CD8-positive, alpha-beta T cell (primary cell): ENCODE measurements at regions of chr3 and their contacts with region 1.

Region 1: GRCh38 chr3:49839193-49839809 is 17.1 kb downstream of the TRAIP start:
- DNase-seq: peak; percentile 63 to 89 (median 85)
- ATAC-seq: peak; percentile 98
- H3K4me3 ChIP-seq: no peak overlapping the region
- H3K4me3 Mint-ChIP-seq: no peak overlapping the region
- H3K27ac ChIP-seq: no peak overlapping the region
- H3K27ac Mint-ChIP-seq: no peak overlapping the region
- H3K4me1 ChIP-seq: no peaks in the 10 kb centered on the region
- H3K4me1 Mint-ChIP-seq: peaks cover 2% of the 10 kb centered on the region
- H3K27me3 ChIP-seq: no peaks in the 10 kb centered on the region
- H3K27me3 Mint-ChIP-seq: no peaks in the 10 kb centered on the region
- CTCF ChIP-seq: peak; percentile 73

Region 2: DNA sequence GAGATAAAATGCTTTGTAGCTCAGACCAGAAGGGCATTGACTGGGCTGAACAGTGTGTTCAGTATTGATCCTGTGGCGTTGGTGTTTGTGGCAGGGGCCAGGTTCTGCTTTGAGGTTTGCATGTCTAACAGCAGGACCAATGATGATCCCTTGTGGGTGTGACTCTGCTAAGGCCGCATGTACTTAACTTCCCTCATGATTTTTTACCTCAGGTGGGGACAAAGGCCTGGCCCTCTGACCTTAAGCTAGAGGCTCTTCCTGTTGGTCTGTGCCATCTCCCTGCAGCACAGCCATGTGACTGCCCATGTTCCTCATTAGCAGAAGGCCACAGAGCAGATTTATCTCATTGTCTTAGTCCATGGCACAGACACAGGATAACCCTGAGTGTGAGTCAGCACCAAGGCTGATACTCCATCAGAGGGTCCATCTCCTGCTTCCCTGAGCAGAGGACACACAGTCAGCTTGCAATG is 319.4 kb before region 1 on chr3:
- CTCF ChIA-PET with region 1: no interaction called
- POLR2A ChIA-PET with region 1: no interaction called
- intact Hi-C with region 1: no loop called
- DNase-seq: no peak
- ATAC-seq: no peak
- H3K4me3 ChIP-seq: no peak overlapping the region
- H3K4me3 Mint-ChIP-seq: no peak overlapping the region
- H3K27ac ChIP-seq: no peak overlapping the region
- H3K27ac Mint-ChIP-seq: no peak overlapping the region
- H3K4me1 ChIP-seq: no peaks in the 10 kb centered on the region
- H3K4me1 Mint-ChIP-seq: peaks cover 9% of the 10 kb centered on the region
- H3K27me3 ChIP-seq: no peaks in the 10 kb centered on the region
- H3K27me3 Mint-ChIP-seq: no peaks in the 10 kb centered on the region
- CTCF ChIP-seq: no peak

Region 3: GRCh38 chr3:49539659-49540560 is 299.4 kb before region 1 on chr3:
- CTCF ChIA-PET with region 1: interaction called, 29 read pairs
- POLR2A ChIA-PET with region 1: no interaction called
- intact Hi-C with region 1: loop called (anchors 1 to 2 kb)
- DNase-seq: peak; percentile 83 to 97 (median 92)
- ATAC-seq: peak; percentile 96
- H3K4me3 ChIP-seq: peak overlapping the region; percentile 65 to 71
- H3K4me3 Mint-ChIP-seq: peak overlapping the region; percentile 82
- H3K27ac ChIP-seq: peak overlapping the region; percentile 46 to 67
- H3K27ac Mint-ChIP-seq: peak overlapping the region; percentile 32
- H3K4me1 ChIP-seq: peaks cover 4% of the 10 kb centered on the region
- H3K4me1 Mint-ChIP-seq: peaks cover 2% of the 10 kb centered on the region
- H3K27me3 ChIP-seq: no peaks in the 10 kb centered on the region
- H3K27me3 Mint-ChIP-seq: peaks cover 10% of the 10 kb centered on the region
- CTCF ChIP-seq: peak; percentile 76

Region 4: DNA sequence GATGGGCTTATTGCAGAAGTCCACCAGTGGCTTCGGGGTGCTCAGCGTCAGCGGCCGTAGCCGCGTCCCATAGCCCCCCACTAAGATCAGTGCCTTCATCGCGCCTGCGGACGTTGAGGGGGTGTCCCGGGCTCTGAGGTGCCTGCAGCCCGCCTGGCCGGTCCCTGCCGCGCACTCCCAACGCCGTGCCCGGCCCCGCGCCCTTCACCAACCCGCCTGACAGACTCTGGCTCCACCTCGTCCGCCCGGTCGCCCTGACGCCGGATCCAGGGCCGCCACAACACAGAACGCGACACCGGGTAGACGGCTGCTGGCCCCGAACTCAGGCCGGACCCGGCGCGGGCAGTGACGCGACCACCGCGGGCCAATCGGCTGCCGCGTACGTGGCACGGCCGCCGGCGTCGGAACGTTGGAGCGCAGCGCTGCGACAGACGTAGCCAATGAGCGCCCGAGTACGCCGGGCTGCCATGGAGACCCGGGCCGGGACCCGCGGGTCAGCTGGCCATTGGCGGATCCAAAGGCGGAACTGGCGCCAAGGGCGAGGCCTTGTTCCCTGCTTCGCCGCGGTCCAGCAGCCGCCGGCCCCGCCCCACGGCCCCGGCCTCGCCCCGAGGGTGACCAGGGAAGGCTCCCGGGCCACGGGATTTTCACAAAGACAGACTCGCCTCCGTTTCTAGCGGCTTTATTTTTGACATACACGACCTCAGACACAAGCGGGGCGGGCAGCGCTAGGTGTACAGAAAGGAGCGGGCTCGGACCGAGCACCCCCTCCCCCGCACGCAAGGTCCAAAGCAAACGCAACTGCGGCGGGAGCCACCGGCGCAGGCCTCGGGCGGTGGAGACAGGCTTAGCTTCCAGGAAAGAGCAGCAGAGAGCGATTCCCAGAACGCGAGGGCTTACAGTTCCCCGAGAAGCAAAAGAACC is 115.4 kb before region 1 on chr3 and contains the start of gene GMPPB:
- CTCF ChIA-PET with region 1: interaction called, 6 read pairs
- POLR2A ChIA-PET with region 1: interaction called, 3 read pairs
- intact Hi-C with region 1: loop called in 1 of 2 experiments (anchors 5 kb)
- DNase-seq: peak; percentile 82 to 95 (median 91)
- ATAC-seq: peak; percentile 72
- H3K4me3 ChIP-seq: peak within 1 kb of the TSS; percentile 91 to 95
- H3K4me3 Mint-ChIP-seq: peak within 1 kb of the TSS; percentile 86
- H3K27ac ChIP-seq: peak within 1 kb of the TSS; percentile 84 to 93
- H3K27ac Mint-ChIP-seq: peak within 1 kb of the TSS; percentile 90
- H3K4me1 ChIP-seq: peaks cover 19% of the 10 kb centered on the region
- H3K4me1 Mint-ChIP-seq: peaks cover 36% of the 10 kb centered on the region
- H3K27me3 ChIP-seq: no peaks in the 10 kb centered on the region
- H3K27me3 Mint-ChIP-seq: no peaks in the 10 kb centered on the region
- CTCF ChIP-seq: no peak
- total RNA-seq, gene GMPPB: 34.9 to 36.6 TPM

Region 5: GRCh38 chr3:49794926-49795905 is 44.1 kb before region 1 on chr3:
- CTCF ChIA-PET with region 1: interaction called, 416 read pairs
- POLR2A ChIA-PET with region 1: no interaction called
- intact Hi-C with region 1: no loop called
- DNase-seq: no peak
- ATAC-seq: no peak
- H3K4me3 ChIP-seq: no peak overlapping the region
- H3K4me3 Mint-ChIP-seq: no peak overlapping the region
- H3K27ac ChIP-seq: no peak overlapping the region
- H3K27ac Mint-ChIP-seq: no peak overlapping the region
- H3K4me1 ChIP-seq: no peaks in the 10 kb centered on the region
- H3K4me1 Mint-ChIP-seq: peaks cover 2% of the 10 kb centered on the region
- H3K27me3 ChIP-seq: no peaks in the 10 kb centered on the region
- H3K27me3 Mint-ChIP-seq: no peaks in the 10 kb centered on the region
- CTCF ChIP-seq: no peak

Region 6: GRCh38 chr3:49826016-49826415 is 13.3 kb before region 1 on chr3:
- CTCF ChIA-PET with region 1: interaction called, 14 read pairs
- POLR2A ChIA-PET with region 1: no interaction called
- intact Hi-C with region 1: no loop called
- DNase-seq: no peak
- ATAC-seq: no peak
- H3K4me3 ChIP-seq: no peak overlapping the region
- H3K4me3 Mint-ChIP-seq: no peak overlapping the region
- H3K27ac ChIP-seq: no peak overlapping the region
- H3K27ac Mint-ChIP-seq: no peak overlapping the region
- H3K4me1 ChIP-seq: no peaks in the 10 kb centered on the region
- H3K4me1 Mint-ChIP-seq: no peaks in the 10 kb centered on the region
- H3K27me3 ChIP-seq: no peaks in the 10 kb centered on the region
- H3K27me3 Mint-ChIP-seq: no peaks in the 10 kb centered on the region
- CTCF ChIP-seq: no peak